HepG2 (cell line): ENCODE measurements at regions of chr2 and their contacts with region 1.

Region 1: DNA sequence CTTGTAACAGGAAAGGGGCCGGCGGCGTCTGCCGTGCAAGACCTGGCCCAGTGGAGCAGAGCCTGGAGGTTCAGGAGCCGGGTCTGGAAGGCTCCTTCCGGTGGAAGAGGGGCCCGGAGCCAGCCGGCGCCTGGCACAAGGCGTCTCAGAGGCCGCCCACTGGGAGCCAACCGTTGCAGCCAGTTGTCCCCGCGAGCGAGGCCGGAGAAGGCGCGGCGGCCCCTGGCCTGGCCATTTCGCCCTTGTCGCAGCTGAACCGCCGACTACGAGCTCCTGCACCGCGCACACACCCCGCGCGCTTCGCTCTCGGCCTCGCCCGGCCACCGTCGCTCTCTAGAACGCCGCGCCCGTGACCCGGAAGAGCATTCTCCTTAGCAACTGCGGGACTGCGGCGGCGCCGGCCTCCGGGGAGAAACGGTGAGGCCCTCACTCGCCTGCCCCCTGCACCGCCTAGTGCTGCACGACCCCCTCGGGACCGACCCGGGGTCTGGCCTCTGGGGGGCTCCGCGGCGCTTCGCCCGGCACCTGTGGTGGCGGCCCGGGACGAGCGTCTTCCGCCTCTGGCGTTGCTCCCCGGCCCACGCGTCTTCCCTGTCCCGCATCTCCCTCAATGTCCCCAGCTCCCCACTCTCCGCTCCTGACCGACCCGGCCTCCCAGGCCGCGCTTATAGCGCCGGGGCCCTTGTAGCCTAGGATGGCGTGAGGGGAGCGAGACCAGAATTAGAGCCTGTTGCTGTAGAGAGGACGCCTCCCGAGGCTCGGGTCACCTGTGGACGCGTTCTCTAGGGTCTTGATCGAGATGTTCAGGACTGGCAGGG is at the start of gene DIS3L2:
- DNase-seq: peak; percentile 81
- ATAC-seq: peak; percentile 93
- H3K4me3 ChIP-seq: peak within 1 kb of the TSS; percentile 88 to 97 (median 93)
- H3K27ac ChIP-seq: peak within 1 kb of the TSS; percentile 77
- H3K4me1 ChIP-seq: peaks cover 65% of the 10 kb centered on the region
- H3K27me3 ChIP-seq: no peaks in the 10 kb centered on the region
- CTCF ChIP-seq: peak; percentile 33
- EP300 ChIP-seq: no peak
- POLR2A ChIP-seq: peak; percentile 80 to 91
- RAD21 ChIP-seq: peak; percentile 78
- total RNA-seq, gene DIS3L2: 20.3 and 23.9 TPM in 2 replicates

Region 2: GRCh38 chr2:231387904-231388724 is 573.4 kb before region 1 on chr2:
- CTCF ChIA-PET with region 1: no interaction called
- POLR2A ChIA-PET with region 1: no interaction called
- in situ Hi-C with region 1: no loop called
- intact Hi-C with region 1: no loop called
- DNase-seq: peak; percentile 73
- ATAC-seq: peak; percentile 89
- H3K4me3 ChIP-seq: peak overlapping the region; percentile 12 to 65 (median 43); a peak in 4 of 6 replicates
- H3K27ac ChIP-seq: no peak overlapping the region
- H3K4me1 ChIP-seq: peaks cover 30% of the 10 kb centered on the region
- H3K27me3 ChIP-seq: peaks cover 8 to 43% of the 10 kb centered on the region in 2 experiments; a peak in 4 of 5 replicates
- CTCF ChIP-seq: peak; percentile 55
- EP300 ChIP-seq: no peak
- POLR2A ChIP-seq: peak in 1 of 2 experiments; percentile 63; a peak in 2 of 4 replicates
- RAD21 ChIP-seq: no peak; the same call in none of the 2 replicates

Region 3: GRCh38 chr2:231977430-231977829 is 15.9 kb after region 1 on chr2:
- CTCF ChIA-PET with region 1: no interaction called
- POLR2A ChIA-PET with region 1: interaction called, 11 read pairs
- in situ Hi-C with region 1: no loop called
- intact Hi-C with region 1: no loop called
- DNase-seq: peak; percentile 51
- ATAC-seq: peak; percentile 76
- H3K4me3 ChIP-seq: no peak overlapping the region
- H3K27ac ChIP-seq: peak overlapping the region; percentile 30
- H3K4me1 ChIP-seq: peaks cover 12% of the 10 kb centered on the region
- H3K27me3 ChIP-seq: no peaks in the 10 kb centered on the region
- CTCF ChIP-seq: no peak
- EP300 ChIP-seq: no peak
- POLR2A ChIP-seq: no peak
- RAD21 ChIP-seq: no peak

Region 4: GRCh38 chr2:232117413-232117812 is 155.9 kb after region 1 on chr2:
- CTCF ChIA-PET with region 1: no interaction called
- POLR2A ChIA-PET with region 1: no interaction called
- in situ Hi-C with region 1: no loop called
- intact Hi-C with region 1: no loop called
- DNase-seq: peak; percentile 72
- ATAC-seq: peak; percentile 99
- H3K4me3 ChIP-seq: no peak overlapping the region
- H3K27ac ChIP-seq: no peak overlapping the region
- H3K4me1 ChIP-seq: peaks cover 13% of the 10 kb centered on the region
- H3K27me3 ChIP-seq: no peaks in the 10 kb centered on the region
- CTCF ChIP-seq: peak; percentile 81
- EP300 ChIP-seq: no peak
- POLR2A ChIP-seq: no peak
- RAD21 ChIP-seq: peak; percentile 81